Dorsolateral prefrontal cortex (tissue), 120 donors: ENCODE measurements at regions of chr4 and their contacts with region 1.

Region 1: GRCh38 chr4:103008875-103009729 is 10.4 kb downstream of the SLC9B1 start:
- DNase-seq: no peak
- H3K4me3 ChIP-seq: no peak overlapping the region
- H3K27ac ChIP-seq: peak overlapping the region in 1 of 59 donors; percentile 31
- H3K27me3 ChIP-seq: no peaks in the 10 kb centered on the region
- CTCF ChIP-seq: peak; percentile 49 to 93 (median 80)

Region 2: DNA sequence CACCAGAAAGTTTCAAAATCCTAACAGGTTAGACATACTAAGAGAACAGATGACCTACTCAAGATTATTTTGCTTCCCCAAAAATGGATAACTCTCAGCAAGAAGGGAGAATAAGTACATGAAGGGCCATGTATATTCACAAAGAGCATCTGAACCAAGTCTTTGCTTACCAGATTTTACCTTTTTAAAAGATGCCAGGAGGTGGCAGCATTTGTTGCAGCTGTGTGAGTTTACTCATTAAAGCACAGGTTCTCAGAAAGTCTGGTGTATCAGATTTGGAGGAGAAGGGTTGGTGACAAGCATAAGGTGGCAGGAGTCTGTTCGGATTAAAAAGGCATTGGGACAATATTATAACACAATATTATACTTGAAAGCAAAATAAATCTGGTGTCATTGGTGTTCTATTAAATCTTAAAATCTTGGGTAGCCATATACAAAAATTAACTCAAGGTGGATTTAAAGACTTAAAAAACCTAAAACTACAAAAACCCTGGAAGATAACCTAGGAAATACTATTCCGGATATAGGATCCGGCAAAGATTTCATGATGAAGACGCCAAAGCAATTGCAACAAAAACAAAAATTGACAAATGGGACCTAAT is 559.2 kb before region 1 on chr4:
- intact Hi-C with region 1: loop called (anchors 5 kb)
- DNase-seq: peak in 3 of 10 donors; percentile 30 to 68 (median 32)
- H3K4me3 ChIP-seq: no peak overlapping the region
- H3K27ac ChIP-seq: no peak overlapping the region
- H3K27me3 ChIP-seq: no peaks in the 10 kb centered on the region
- CTCF ChIP-seq: peak; percentile 46 to 84 (median 68)

Region 3: DNA sequence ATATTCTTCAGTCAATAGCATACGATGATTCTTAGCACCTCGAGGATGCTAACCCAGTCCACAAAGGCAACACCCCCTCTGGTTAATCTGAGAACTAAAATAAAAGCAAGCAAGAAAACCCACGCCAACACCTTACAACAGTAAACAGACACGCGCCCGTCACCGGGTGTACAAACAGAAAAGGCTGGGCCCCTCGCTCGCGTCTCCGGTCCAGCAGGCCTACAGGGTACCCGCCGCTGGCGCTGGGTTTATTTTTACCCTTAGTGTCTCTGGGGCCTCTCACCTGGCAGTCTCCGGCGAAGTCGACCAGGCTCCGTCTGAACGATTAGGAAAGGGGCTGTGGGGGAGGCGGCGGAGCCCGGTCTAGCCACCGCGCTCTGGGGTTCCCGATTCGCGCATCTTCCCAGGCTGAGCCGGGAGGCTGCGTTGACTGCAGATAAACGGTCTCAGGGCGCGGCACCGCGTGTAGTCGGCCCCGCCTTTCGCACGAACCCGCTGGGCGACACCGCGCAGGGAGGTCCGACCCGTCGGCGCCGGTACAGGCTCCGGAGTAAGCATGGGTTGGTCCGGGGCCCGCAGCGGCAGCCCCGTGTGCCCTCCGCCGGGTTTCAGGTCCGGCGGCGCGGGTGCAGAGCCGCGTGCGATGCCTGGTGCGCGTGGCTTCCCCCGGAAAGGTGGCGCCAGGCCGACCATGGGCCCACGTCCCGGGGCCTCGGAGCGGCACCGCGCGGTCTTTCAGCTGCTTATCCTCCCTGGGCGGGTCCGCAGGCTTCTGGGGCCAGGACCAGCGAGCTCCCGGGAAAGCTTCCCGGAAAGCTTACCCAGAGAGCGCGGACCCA is 67.0 kb after region 1 on chr4:
- intact Hi-C with region 1: no loop called
- DNase-seq: peak in 9 of 10 donors; percentile 41 to 74 (median 65)
- H3K4me3 ChIP-seq: peak overlapping the region; percentile 48 to 94 (median 81)
- H3K27ac ChIP-seq: peak overlapping the region in 58 of 59 donors; percentile 46 to 96 (median 88)
- H3K27me3 ChIP-seq: no peaks in the 10 kb centered on the region
- CTCF ChIP-seq: peak in 7 of 56 donors; percentile 3 to 34 (median 8)